ENCODE measurements at regions of chr1 and their contacts with region 1.

Region 1: DNA sequence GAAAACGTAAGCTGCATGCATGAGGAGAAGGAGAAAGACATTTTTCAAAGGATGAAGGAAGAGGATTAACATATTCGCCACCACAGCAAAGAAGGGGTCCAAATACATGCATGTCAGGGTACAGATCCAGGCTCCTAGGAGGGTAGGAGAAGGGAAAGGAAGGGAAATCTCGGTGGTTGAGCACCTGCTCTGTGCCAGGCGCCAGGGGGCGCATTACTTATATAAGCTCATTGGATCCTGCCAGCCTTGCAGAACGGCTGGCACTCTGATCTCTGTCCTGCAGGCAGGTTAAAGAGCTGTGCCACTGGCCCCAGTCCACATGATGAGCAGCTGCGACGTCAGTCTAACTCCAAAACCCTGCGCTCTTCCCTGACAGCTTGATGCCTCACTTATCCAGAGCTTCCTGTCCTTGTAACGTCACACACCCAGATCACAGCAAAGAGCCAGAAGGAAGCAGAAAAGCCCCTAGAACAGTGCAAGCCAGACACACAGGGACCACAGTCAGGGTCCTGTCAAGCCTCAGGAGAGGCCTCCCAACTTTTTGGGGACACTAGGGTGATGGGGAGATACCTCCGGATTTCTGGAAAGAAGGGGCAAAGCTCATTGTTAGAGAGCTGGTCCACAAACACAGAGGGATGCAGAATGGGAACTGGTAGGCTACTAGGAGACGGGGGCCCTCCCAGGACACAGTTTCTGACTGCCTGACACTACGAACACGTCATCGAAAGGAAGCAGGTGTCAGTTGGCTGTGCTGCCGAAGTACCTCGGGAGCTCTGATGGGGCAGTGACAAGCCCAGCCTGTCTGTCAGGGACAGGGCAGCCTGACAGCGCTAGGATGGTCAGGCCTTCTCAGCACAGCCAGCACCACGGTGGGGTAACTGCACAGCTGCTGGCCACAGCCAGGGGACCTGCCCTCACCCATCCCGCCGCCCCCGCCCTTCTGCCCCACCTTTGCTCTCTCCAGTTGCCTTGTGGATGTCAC is 99.1 kb downstream of the BEND5 start:
- DNase-seq: peak; percentile 49
- H3K4me3 ChIP-seq: no peak overlapping the region
- H3K27ac ChIP-seq: no peak overlapping the region
- H3K4me1 ChIP-seq: peaks cover 11% of the 10 kb centered on the region
- H3K27me3 ChIP-seq: no peaks in the 10 kb centered on the region
- CTCF ChIP-seq: peak; percentile 59 to 74

Region 2: GRCh38 chr1:48498096-48498791 is 179.4 kb before region 1 on chr1:
- CTCF ChIA-PET with region 1: no interaction called
- dilution Hi-C with region 1: no loop called
- in situ Hi-C with region 1: no loop called
- intact Hi-C with region 1: no loop called
- DNase-seq: peak; percentile 43
- H3K4me3 ChIP-seq: no peak overlapping the region
- H3K27ac ChIP-seq: no peak overlapping the region
- H3K4me1 ChIP-seq: peaks cover 14% of the 10 kb centered on the region
- H3K27me3 ChIP-seq: no peaks in the 10 kb centered on the region
- CTCF ChIP-seq: peak; percentile 95 to 97

Region 3: GRCh38 chr1:48572646-48573261 is 104.8 kb before region 1 on chr1:
- CTCF ChIA-PET with region 1: interaction called, 4 read pairs
- dilution Hi-C with region 1: no loop called
- in situ Hi-C with region 1: no loop called
- intact Hi-C with region 1: loop called (anchors 5 kb)
- DNase-seq: peak; percentile 49
- H3K4me3 ChIP-seq: no peak overlapping the region
- H3K27ac ChIP-seq: no peak overlapping the region
- H3K4me1 ChIP-seq: peaks cover 12% of the 10 kb centered on the region
- H3K27me3 ChIP-seq: no peaks in the 10 kb centered on the region
- CTCF ChIP-seq: peak; percentile 85 to 88

Region 4: DNA sequence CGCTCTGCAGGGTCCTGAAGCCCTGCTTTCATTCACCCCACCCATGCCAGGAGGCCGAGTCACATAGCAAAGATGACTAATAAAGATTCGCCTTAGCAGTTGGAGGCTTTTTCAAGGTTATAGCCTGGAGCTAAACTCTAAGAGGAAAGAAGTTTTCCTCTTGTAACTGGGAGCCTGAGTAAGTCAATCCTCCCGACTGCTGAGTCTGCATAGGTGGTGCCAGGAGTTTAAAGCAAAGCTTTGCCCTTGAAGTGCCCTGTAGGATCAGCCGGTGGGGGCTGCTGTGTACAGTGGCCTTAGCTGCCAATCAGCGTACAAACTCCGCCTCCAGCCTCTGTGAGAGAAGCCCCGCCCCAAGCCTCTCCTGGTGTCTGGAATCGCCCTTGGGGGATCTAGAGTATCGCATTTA is 58.1 kb before region 1 on chr1:
- CTCF ChIA-PET with region 1: no interaction called
- dilution Hi-C with region 1: no loop called
- in situ Hi-C with region 1: no loop called
- intact Hi-C with region 1: no loop called
- DNase-seq: peak; percentile 72
- H3K4me3 ChIP-seq: no peak overlapping the region
- H3K27ac ChIP-seq: no peak overlapping the region
- H3K4me1 ChIP-seq: peaks cover 5% of the 10 kb centered on the region
- H3K27me3 ChIP-seq: no peaks in the 10 kb centered on the region
- CTCF ChIP-seq: no peak

Region 5: GRCh38 chr1:48691429-48692001 is 13.9 kb after region 1 on chr1:
- CTCF ChIA-PET with region 1: interaction called, 10 read pairs
- dilution Hi-C with region 1: no loop called
- in situ Hi-C with region 1: no loop called
- intact Hi-C with region 1: loop called (anchors 1 kb)
- DNase-seq: no peak
- H3K4me3 ChIP-seq: no peak overlapping the region
- H3K27ac ChIP-seq: no peak overlapping the region
- H3K4me1 ChIP-seq: peaks cover 35% of the 10 kb centered on the region
- H3K27me3 ChIP-seq: no peaks in the 10 kb centered on the region
- CTCF ChIP-seq: no peak

Region 6: DNA sequence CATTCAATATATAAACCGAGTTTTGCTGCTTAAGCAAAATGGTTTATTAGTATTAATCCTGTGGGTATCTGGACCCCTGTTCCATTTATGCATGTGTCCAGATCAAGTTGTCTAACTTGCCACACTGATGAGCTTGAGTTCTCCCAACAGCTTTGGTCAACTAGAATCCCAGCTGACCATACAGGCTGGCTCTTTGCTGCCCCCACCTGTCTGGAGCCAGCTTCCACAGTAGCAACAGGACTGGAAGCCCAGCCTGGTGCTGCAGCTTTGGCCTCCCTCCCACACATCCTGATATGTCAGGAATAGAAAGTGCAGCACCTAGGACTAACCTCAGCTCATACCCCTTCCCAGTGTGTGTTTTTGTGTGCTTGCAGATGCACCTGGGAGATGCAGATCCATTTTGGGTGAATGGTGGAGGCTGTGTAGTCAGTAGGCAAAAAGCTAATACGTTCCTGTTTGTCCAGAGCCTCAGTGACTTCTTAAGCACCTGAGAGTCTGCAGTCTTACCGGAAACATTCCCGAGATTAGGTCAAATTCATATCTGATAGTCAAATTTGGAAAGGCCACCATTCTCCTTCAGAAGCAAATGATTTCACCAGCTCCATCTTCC is 140.0 kb after region 1 on chr1:
- CTCF ChIA-PET with region 1: interaction called, 15 read pairs
- dilution Hi-C with region 1: no loop called
- in situ Hi-C with region 1: no loop called
- intact Hi-C with region 1: loop called (anchors 1 kb)
- DNase-seq: peak; percentile 47
- H3K4me3 ChIP-seq: no peak overlapping the region
- H3K27ac ChIP-seq: no peak overlapping the region
- H3K4me1 ChIP-seq: no peaks in the 10 kb centered on the region
- H3K27me3 ChIP-seq: no peaks in the 10 kb centered on the region
- CTCF ChIP-seq: peak; percentile 94 to 97

Measured in mammary epithelial cell (primary cell).